Body of pancreas (tissue), 4 donors: ENCODE measurements at regions of chr6 and their contacts with region 1.

Region 1: DNA sequence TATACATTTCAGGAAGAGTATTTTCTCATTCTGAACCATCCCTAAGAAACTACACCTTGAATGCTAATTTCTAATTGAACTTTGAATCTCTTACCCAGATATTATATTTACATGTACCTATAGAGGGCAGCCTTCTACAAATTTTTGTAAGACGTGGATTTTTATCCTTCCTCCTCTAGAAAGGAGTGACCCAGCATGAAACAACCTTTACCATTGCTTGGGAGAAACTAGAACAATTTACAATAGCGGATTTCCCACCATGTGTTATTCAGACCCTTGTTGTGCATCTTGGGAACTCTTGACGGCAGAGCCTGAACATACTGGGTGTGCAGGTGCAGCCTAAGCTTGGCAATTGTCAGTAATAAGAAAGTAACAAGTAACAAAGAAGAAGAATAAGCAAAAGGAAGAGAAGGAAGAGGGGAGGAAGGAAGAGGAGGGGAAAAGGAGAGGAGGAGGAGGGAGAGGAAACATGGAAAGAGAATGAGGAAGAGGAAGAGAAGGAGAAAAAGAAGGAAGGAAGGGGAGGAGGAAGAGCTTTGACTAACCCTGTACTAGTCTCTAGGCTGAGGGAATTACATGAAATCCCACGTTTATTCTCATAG is 10.8 kb upstream of the TAAR1 start:
- DNase-seq: no peak
- ATAC-seq: peak; percentile 75
- H3K4me3 ChIP-seq: no peak overlapping the region
- H3K27ac ChIP-seq: peak overlapping the region in 1 of 4 donors; percentile 29
- H3K4me1 ChIP-seq: peaks cover 14% of the 10 kb centered on the region
- H3K27me3 ChIP-seq: no peaks in the 10 kb centered on the region
- CTCF ChIP-seq: peak; percentile 12 to 68 (median 62)
- POLR2A ChIP-seq: no peak

Region 2: DNA sequence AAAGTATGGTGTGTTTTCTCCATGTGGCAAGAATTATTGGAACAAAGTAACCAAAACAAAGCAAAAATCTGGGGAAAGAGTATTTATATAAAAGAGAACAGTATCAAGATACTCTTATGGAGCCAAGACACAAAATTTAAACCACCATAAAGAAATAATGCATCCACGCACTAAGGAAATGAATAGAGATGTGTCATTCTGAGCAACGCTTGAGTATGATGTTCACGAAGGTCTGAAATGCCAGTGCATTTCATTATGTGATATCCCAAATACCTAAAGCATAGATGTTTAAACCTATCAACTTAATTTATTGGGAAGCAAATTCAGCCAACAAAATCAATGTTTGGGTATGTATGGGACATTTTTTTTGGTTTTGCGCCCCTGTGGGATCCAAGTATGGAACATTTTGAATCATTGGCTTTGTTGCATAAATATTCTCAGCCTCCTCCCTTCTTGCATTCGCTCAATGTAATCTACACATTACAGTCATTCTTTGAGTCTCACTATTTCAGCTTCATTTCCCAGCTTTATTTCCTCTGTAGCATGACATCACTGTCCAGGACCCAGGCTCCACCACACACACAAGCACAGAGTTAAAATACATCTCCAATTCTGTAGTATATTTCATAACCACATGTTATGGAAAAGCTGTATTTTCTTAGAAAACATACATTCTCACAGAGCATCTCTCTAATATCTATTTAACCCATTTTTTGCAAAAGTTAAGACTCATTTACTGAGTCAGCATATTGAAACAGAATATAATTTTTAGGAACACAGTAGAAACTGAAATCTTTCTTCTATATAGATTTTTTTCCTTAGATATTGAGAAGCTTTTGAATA is 256.9 kb before region 1 on chr6:
- intact Hi-C with region 1: no loop called
- DNase-seq: no peak
- ATAC-seq: no peak
- H3K4me3 ChIP-seq: no peak overlapping the region
- H3K27ac ChIP-seq: no peak overlapping the region
- H3K4me1 ChIP-seq: no peaks in the 10 kb centered on the region
- H3K27me3 ChIP-seq: no peaks in the 10 kb centered on the region
- CTCF ChIP-seq: no peak
- POLR2A ChIP-seq: no peak

Region 3: GRCh38 chr6:132530293-132530974 is 139.4 kb before region 1 on chr6:
- intact Hi-C with region 1: loop called (anchors 10 kb)
- DNase-seq: peak; percentile 61 to 68 (median 64)
- ATAC-seq: peak; percentile 85
- H3K4me3 ChIP-seq: peak overlapping the region in 1 of 2 donors; percentile 3
- H3K27ac ChIP-seq: no peak overlapping the region
- H3K4me1 ChIP-seq: no peaks in the 10 kb centered on the region
- H3K27me3 ChIP-seq: no peaks in the 10 kb centered on the region
- CTCF ChIP-seq: peak; percentile 68 to 81 (median 79)
- POLR2A ChIP-seq: no peak

Region 4: GRCh38 chr6:132768051-132768517 is 98.3 kb after region 1 on chr6:
- intact Hi-C with region 1: loop called (anchors 5 kb)
- DNase-seq: peak; percentile 38 to 67 (median 54)
- ATAC-seq: peak; percentile 90
- H3K4me3 ChIP-seq: no peak overlapping the region
- H3K27ac ChIP-seq: no peak overlapping the region
- H3K4me1 ChIP-seq: peaks cover 13% of the 10 kb centered on the region
- H3K27me3 ChIP-seq: no peaks in the 10 kb centered on the region
- CTCF ChIP-seq: peak; percentile 51 to 99 (median 72)
- POLR2A ChIP-seq: no peak